ENCODE measurements at regions of chr18 and their contacts with region 1.

Region 1: DNA sequence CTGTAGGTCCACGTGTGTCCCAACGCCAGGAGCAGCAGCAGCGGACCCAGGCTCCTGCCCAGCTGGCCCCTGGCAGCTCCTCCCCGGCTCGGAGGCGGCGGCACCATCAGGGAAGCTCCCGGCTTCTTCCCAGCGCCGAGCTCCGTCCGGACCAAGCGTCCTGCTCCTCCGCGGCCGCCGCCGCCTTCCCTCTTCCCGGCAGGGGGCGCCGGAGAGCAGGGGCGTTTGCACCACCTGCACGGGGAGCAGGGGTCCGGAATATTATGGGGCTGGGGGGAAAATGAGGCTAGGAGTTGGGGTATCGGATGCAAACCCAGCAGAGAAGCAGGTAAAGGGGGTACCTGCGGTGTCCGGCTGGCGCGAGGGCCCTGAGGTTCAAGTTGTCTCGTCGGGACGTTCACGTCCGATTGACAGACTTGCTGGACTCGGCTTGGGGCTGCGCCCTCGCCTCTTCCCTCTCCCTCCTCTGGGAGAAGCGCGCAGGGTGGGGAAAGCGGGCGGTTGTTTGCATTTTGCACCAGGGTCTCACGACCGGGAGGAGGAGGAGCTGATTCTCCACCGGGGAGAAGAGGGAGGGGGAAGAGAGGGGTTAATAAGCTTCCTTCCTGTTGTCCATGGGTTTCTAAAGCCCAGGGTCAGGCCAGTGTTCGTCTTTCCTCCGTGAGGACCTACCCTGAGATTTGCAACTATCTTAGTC is at the start of gene CCBE1:
- DNase-seq: peak; percentile 70

Region 2: GRCh38 chr18:59672235-59672711 is 25.1 kb before region 1 on chr18:
- CTCF ChIA-PET with region 1: interaction called, 11 read pairs
- POLR2A ChIA-PET with region 1: no interaction called
- DNase-seq: no peak

Region 3: GRCh38 chr18:59685501-59685900 is 11.9 kb before region 1 on chr18:
- CTCF ChIA-PET with region 1: interaction called, 16 read pairs
- POLR2A ChIA-PET with region 1: interaction called, 3 read pairs
- DNase-seq: no peak

Region 4: GRCh38 chr18:59814891-59815290 is 117.5 kb after region 1 on chr18:
- CTCF ChIA-PET with region 1: no interaction called
- POLR2A ChIA-PET with region 1: no interaction called
- DNase-seq: no peak

Measured in HEK293T (cell line).